ENCODE measurements at regions of chr6 and their contacts with region 1.

Region 1: DNA sequence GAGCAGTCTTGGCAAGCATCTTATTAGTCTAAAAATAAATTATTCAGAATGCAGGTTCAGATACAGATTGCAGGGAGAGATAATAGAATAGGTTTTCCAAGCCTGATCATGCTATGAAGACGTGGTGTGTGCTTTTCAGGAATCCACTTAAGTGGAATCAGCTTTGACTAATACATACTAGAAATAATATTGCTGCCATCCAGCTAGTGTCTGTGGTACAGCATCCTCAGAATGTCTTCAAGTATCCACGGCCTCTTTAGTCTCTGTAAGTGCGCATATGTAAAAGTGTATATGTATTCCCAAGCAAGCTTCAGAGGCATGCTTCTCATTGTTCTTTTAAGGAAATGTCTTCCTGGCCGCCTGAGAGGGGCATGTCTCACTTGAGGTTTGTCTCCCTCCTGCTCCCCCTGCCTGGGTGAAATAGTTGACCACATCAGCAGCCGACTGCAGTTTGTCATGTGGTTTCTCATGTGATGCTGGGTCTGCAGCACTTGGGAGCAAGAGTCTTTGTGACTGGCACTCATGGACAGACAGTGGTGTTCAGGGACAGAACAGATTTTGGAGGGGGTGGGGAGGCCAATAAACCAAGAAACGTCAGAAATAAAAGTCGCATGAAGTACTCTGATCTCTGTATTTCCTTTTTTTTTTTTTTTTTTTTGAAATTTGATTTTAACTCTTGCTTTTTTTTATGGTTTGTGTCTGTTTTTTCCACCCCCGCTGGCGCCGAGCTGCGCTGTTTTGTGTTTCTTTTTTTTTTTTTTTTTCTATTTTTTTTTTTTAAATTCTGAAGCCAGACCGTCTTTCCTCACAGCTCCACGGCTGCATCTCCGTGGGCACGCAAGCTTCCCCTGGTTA is 150.8 kb downstream of the PRL start:
- DNase-seq: peak; percentile 78
- ATAC-seq: peak; percentile 12; the same call in 1 of the 2 replicates
- H3K4me3 ChIP-seq: no peak overlapping the region
- H3K27ac ChIP-seq: peak overlapping the region; percentile 95
- H3K4me1 ChIP-seq: peaks cover 24% of the 10 kb centered on the region
- H3K27me3 ChIP-seq: no peaks in the 10 kb centered on the region
- CTCF ChIP-seq: peak; percentile 43
- POLR2A ChIP-seq: no peak
- RAD21 ChIP-seq: 0 out of 2 replicates have a peak, but pooled peaks have one; percentile 35

Region 2: DNA sequence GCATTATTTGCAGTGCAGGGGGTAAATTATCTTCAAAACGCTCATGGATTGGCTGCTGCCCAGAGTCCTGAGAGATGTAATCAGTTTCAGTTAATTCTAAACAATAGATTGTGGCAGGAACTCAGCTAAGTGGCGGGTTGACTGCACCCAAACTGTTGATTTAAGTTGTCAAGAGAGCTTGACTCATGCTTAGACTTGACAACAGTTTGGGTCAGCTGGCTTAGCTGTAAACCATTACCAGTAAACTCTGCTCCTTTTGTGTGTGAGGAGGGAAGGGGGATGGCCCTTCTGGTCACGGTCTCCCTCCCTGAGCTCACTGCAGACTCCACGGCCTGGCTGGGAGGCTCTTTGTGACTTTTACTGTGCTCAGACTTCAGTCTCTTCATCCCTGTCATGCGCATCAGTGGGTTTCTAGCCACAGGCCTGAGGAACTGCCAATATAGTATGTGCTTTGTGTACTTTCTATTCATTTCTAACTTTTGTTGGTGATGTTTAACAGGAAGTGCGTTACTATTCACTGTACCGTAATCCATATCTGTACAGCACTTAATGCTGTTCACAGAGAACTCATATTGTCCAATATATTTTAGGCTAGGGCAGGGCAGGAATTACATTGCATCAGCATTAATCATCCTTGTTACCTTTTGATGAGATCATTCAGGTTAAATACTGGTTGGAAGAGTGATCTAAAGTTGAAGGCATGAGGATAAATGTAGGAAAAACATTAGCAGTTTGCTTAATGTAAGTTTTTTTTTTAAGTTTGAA is 1123.5 kb before region 1 on chr6:
- CTCF ChIA-PET with region 1: no interaction called
- POLR2A ChIA-PET with region 1: no interaction called
- dilution Hi-C with region 1: no loop called
- in situ Hi-C with region 1: no loop called
- intact Hi-C with region 1: loop called (anchors 10 kb)
- DNase-seq: peak; percentile 82
- ATAC-seq: peak; percentile 94
- H3K4me3 ChIP-seq: no peak overlapping the region
- H3K27ac ChIP-seq: peak overlapping the region; percentile 80; the same call in 1 of the 2 replicates
- H3K4me1 ChIP-seq: peaks cover 2% of the 10 kb centered on the region; the same call in 1 of the 2 replicates
- H3K27me3 ChIP-seq: no peaks in the 10 kb centered on the region
- CTCF ChIP-seq: no peak
- POLR2A ChIP-seq: no peak
- RAD21 ChIP-seq: no peak

Region 3: DNA sequence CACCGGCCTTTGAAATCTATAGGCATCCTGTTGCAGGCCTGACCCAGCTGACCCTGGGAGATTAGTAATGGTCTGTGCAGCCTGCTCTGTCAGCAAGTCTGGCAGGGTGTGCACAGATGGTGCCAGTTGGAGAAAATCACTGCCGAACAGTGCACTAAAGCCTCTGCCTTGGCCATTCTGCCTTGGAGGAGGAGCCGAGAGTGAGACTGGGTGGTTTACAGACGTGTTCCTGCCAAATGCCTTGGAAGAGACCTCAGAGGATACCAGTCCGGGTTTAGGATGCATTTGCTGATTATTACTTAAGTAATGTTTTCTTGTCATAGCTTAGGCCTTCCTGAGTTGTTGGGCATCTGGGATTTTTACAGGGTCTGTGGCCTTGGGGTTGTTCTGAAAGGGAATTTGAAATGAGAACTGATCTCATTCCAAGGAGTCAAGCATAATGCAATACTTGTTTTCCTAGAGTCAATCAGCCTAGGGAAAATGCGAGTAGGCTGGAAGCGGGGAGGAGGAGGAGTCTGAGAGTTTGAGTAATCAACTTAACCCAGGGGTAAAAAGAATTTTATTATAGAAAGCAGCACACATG is 260.4 kb before region 1 on chr6:
- CTCF ChIA-PET with region 1: no interaction called
- POLR2A ChIA-PET with region 1: no interaction called
- dilution Hi-C with region 1: no loop called
- in situ Hi-C with region 1: no loop called
- intact Hi-C with region 1: loop called (anchors 2 kb)
- DNase-seq: peak; percentile 85
- ATAC-seq: peak; percentile 80
- H3K4me3 ChIP-seq: no peak overlapping the region
- H3K27ac ChIP-seq: peak overlapping the region; percentile 67; the same call in 1 of the 2 replicates
- H3K4me1 ChIP-seq: peaks cover 12% of the 10 kb centered on the region
- H3K27me3 ChIP-seq: no peaks in the 10 kb centered on the region
- CTCF ChIP-seq: no peak
- POLR2A ChIP-seq: no peak
- RAD21 ChIP-seq: 0 out of 2 replicates have a peak, but pooled peaks have one; percentile 1

Region 4: GRCh38 chr6:22320750-22321149 is 174.7 kb after region 1 on chr6:
- CTCF ChIA-PET with region 1: no interaction called
- POLR2A ChIA-PET with region 1: no interaction called
- dilution Hi-C with region 1: no loop called
- in situ Hi-C with region 1: no loop called
- intact Hi-C with region 1: loop called (anchors 5 kb)
- DNase-seq: peak; percentile 93
- ATAC-seq: peak; percentile 94
- H3K4me3 ChIP-seq: no peak overlapping the region
- H3K27ac ChIP-seq: no peak overlapping the region
- H3K4me1 ChIP-seq: peaks cover 15% of the 10 kb centered on the region
- H3K27me3 ChIP-seq: no peaks in the 10 kb centered on the region
- CTCF ChIP-seq: no peak
- POLR2A ChIP-seq: no peak
- RAD21 ChIP-seq: no peak

Region 5: DNA sequence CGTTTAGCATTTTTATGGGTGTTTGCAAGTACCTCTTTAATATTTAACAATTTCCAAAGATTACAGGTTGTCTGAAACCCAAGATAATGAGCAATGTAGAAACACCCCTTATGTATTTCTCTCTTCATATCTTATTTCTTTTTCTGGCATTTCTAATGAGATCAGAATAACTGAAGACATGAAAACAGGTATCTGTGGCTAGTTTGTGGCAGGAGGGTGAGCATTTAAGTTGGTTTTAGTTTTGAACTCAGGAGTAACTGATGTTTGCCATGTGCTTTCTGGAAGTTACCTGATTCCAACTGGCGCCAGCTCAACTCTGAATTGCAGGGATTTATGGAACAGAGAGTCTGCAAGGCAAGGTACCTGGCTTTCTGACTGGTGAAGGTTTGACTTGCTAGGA is 186.2 kb after region 1 on chr6:
- CTCF ChIA-PET with region 1: no interaction called
- POLR2A ChIA-PET with region 1: no interaction called
- dilution Hi-C with region 1: no loop called
- in situ Hi-C with region 1: no loop called
- intact Hi-C with region 1: no loop called
- DNase-seq: no peak
- ATAC-seq: no peak
- H3K4me3 ChIP-seq: no peak overlapping the region
- H3K27ac ChIP-seq: no peak overlapping the region
- H3K4me1 ChIP-seq: peaks cover 11% of the 10 kb centered on the region
- H3K27me3 ChIP-seq: no peaks in the 10 kb centered on the region
- CTCF ChIP-seq: no peak
- POLR2A ChIP-seq: no peak
- RAD21 ChIP-seq: no peak

Region 6: GRCh38 chr6:22828179-22829062 is 682.4 kb after region 1 on chr6:
- CTCF ChIA-PET with region 1: no interaction called
- POLR2A ChIA-PET with region 1: no interaction called
- dilution Hi-C with region 1: no loop called
- in situ Hi-C with region 1: no loop called
- intact Hi-C with region 1: loop called (anchors 10 kb)
- DNase-seq: peak; percentile 97
- ATAC-seq: peak; percentile 84
- H3K4me3 ChIP-seq: no peak overlapping the region
- H3K27ac ChIP-seq: peak overlapping the region; percentile 17; the same call in 1 of the 2 replicates
- H3K4me1 ChIP-seq: peaks cover 4% of the 10 kb centered on the region
- H3K27me3 ChIP-seq: no peaks in the 10 kb centered on the region
- CTCF ChIP-seq: peak; percentile 64
- POLR2A ChIP-seq: no peak
- RAD21 ChIP-seq: peak; percentile 65

Region 7: DNA sequence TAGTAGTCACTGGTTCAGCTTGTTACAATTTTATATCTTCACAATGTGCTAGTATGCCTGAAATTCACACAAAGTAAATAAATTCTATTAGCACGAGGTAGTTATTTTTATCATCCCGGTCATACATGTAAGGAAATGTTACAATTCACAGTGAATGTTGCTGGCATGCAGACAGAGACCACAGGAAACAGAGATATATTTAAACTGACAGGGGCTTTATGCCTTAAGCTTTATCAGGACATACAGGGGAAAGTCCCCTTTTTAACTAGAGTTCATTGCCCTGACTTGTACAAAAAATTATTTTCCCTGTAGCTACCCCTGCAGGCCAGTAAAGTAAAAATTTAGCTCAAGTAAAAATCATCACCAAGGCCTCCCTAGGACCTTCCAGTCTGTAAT is 1268.0 kb after region 1 on chr6:
- CTCF ChIA-PET with region 1: no interaction called
- POLR2A ChIA-PET with region 1: no interaction called
- dilution Hi-C with region 1: no loop called
- in situ Hi-C with region 1: no loop called
- intact Hi-C with region 1: loop called (anchors 2 kb)
- DNase-seq: peak; percentile 92
- ATAC-seq: peak; percentile 87
- H3K4me3 ChIP-seq: no peak overlapping the region
- H3K27ac ChIP-seq: peak overlapping the region; percentile 82
- H3K4me1 ChIP-seq: peaks cover 6% of the 10 kb centered on the region
- H3K27me3 ChIP-seq: no peaks in the 10 kb centered on the region
- CTCF ChIP-seq: peak; percentile 60
- POLR2A ChIP-seq: no peak
- RAD21 ChIP-seq: peak; percentile 63

Measured in IMR-90 (cell line).